ENCODE measurements at regions of chr17 and their contacts with region 1.

Region 1: GRCh38 chr17:74748529-74749365 is at the start of gene NHERF1:
- DNase-seq: peak; percentile 99
- H3K4me3 Mint-ChIP-seq: peak within 1 kb of the TSS; percentile 97
- H3K27ac Mint-ChIP-seq: peak within 1 kb of the TSS; percentile 93
- H3K4me1 Mint-ChIP-seq: peaks cover 60% of the 10 kb centered on the region
- H3K27me3 Mint-ChIP-seq: no peaks in the 10 kb centered on the region
- total RNA-seq, gene NHERF1: 134 and 138 TPM in 2 replicates

Region 2: DNA sequence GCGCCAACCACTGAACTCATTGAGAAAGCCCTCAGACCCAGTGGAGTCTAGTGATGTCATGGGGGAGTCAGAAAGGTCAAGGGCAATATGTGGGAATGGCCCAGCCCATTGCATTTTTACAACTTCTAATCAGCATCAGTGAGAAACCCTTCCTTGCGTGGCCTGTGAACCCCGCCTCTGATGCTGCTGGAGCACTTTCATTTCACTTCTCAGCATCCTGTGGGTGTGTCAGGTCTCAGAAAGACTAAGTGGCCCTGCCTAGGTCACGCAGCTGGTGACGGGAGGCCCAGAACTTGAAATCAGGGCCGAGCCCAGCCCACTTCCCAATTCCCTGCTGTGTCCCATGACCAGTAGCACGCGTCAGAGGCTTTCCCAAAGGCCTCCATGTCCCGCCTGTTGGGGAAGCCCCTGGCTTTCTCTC is 468.6 kb before region 1 on chr17:
- intact Hi-C with region 1: loop called (anchors 10 kb)
- DNase-seq: peak; percentile 90
- H3K4me3 Mint-ChIP-seq: peak overlapping the region; percentile 42
- H3K27ac Mint-ChIP-seq: peak overlapping the region; percentile 90
- H3K4me1 Mint-ChIP-seq: peaks cover 42% of the 10 kb centered on the region
- H3K27me3 Mint-ChIP-seq: no peaks in the 10 kb centered on the region

Region 3: DNA sequence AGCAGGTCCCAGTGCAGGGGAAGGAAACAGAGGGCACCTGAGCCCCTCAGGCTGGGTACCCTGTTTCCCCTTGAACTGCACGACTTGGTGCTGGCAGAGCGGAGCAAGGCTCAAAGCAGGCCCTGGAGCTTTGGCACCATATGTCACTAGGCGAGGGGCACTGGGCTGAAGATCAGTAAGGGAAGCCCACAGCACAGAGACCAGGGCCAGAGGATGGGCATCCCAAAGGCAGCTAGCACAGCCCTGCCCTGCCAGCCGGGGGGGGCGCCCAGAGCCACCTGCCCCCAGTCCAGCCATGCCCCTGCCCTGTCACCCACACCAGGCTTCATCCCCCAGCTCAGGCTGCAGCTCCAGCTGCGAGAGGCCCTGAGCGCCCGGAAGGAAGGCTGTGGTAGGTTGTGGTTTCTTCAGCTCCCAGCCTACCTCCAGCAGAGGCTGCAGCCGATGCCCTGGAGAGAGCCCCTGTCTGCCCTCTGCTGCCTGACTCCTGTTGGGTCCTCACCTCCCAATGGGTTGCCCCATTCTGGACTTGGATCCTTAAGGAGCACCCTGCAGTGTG is 10.6 kb after region 1 on chr17:
- intact Hi-C with region 1: loop called (anchors 1 kb)
- DNase-seq: peak; percentile 89
- H3K4me3 Mint-ChIP-seq: peak overlapping the region; percentile 74
- H3K27ac Mint-ChIP-seq: peak overlapping the region; percentile 78
- H3K4me1 Mint-ChIP-seq: peaks cover 55% of the 10 kb centered on the region
- H3K27me3 Mint-ChIP-seq: no peaks in the 10 kb centered on the region

Region 4: GRCh38 chr17:74776044-74776977 is 27.6 kb after region 1 on chr17 and contains the start of gene NAT9:
- intact Hi-C with region 1: loop called (anchors 1 kb)
- DNase-seq: peak; percentile 100
- H3K4me3 Mint-ChIP-seq: peak within 1 kb of the TSS; percentile 100
- H3K27ac Mint-ChIP-seq: peak within 1 kb of the TSS; percentile 91
- H3K4me1 Mint-ChIP-seq: peaks cover 47% of the 10 kb centered on the region
- H3K27me3 Mint-ChIP-seq: no peaks in the 10 kb centered on the region
- total RNA-seq, gene NAT9: 62.7 and 67.6 TPM in 2 replicates

Region 5: GRCh38 chr17:74864866-74865395 is 116.2 kb after region 1 on chr17:
- intact Hi-C with region 1: loop called (anchors 2 kb)
- DNase-seq: peak; percentile 92
- H3K4me3 Mint-ChIP-seq: no peak overlapping the region
- H3K27ac Mint-ChIP-seq: peak overlapping the region; percentile 64
- H3K4me1 Mint-ChIP-seq: peaks cover 15% of the 10 kb centered on the region
- H3K27me3 Mint-ChIP-seq: peaks cover 15% of the 10 kb centered on the region